CD4-positive, alpha-beta memory T cell (primary cell): ENCODE measurements at regions of chr15 and their contacts with region 1.

Region 1: DNA sequence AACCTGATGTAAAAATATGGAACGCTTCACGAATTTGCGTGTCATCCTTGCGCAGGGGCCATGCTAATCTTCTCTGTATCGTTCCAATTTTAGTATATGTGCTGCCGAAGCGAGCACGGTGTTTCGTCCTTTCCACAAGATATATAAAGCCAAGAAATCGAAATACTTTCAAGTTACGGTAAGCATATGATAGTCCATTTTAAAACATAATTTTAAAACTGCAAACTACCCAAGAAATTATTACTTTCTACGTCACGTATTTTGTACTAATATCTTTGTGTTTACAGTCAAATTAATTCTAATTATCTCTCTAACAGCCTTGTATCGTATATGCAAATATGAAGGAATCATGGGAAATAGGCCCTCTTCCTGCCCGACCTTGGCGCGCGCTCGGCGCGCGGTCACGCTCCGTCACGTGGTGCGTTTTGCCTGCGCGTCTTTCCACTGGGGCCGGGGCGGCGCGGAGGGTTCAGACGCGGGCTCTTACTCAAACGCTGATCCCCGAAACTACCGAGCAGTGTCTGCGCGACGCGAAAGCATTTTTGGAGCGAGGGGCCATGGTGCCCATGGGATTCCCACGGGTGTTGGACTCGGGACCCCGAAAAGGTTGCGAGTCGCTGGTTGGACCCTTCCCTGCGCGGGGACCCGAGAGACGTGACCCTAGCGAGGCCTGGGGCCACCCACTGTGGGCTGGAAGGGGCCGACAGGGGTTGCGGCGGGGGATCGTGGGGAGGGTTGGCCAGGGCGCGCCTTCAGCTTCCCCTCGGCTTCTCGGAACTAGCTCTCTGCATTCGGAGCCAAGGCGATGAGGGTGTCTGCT is at the start of gene RNU6-1:
- DNase-seq: peak; percentile 97 to 98 (median 98)
- H3K4me3 ChIP-seq: peak within 1 kb of the TSS; percentile 91 to 96
- H3K4me3 Mint-ChIP-seq: peak within 1 kb of the TSS; percentile 94 to 98 (median 96)
- H3K27ac ChIP-seq: peak within 1 kb of the TSS; percentile 90
- H3K27ac Mint-ChIP-seq: peak within 1 kb of the TSS; percentile 95 to 99 (median 97)
- H3K4me1 ChIP-seq: peaks cover 37% of the 10 kb centered on the region
- H3K4me1 Mint-ChIP-seq: peaks cover 11 to 54% (median 29%) of the 10 kb centered on the region in 4 donors
- H3K27me3 ChIP-seq: peaks cover 11% of the 10 kb centered on the region
- H3K27me3 Mint-ChIP-seq: peaks cover 6 to 11% of the 10 kb centered on the region in 2 donors
- total RNA-seq, gene RNU6-1: not detected

Region 2: GRCh38 chr15:66946578-66947164 is 893.5 kb before region 1 on chr15:
- CTCF ChIA-PET with region 1: interaction called, 4 read pairs
- POLR2A ChIA-PET with region 1: no interaction called
- intact Hi-C with region 1: loop called (anchors 1 kb)
- DNase-seq: peak; percentile 65 to 73 (median 71)
- H3K4me3 ChIP-seq: no peak overlapping the region
- H3K4me3 Mint-ChIP-seq: no peak overlapping the region
- H3K27ac ChIP-seq: no peak overlapping the region
- H3K27ac Mint-ChIP-seq: no peak overlapping the region
- H3K4me1 ChIP-seq: no peaks in the 10 kb centered on the region
- H3K4me1 Mint-ChIP-seq: peaks cover 0 to 4% (median 2%) of the 10 kb centered on the region in 4 donors
- H3K27me3 ChIP-seq: no peaks in the 10 kb centered on the region
- H3K27me3 Mint-ChIP-seq: no peaks in the 10 kb centered on the region

Region 3: GRCh38 chr15:67254238-67255175 is 585.6 kb before region 1 on chr15 and contains the starts of genes AAGAB and IQCH:
- CTCF ChIA-PET with region 1: no interaction called
- POLR2A ChIA-PET with region 1: no interaction called
- intact Hi-C with region 1: loop called (anchors 2 kb)
- DNase-seq: peak; percentile 93 to 97 (median 95)
- H3K4me3 ChIP-seq: peak within 1 kb of the TSS; percentile 96 to 98
- H3K4me3 Mint-ChIP-seq: peak within 1 kb of the TSS; percentile 96 to 99 (median 98)
- H3K27ac ChIP-seq: peak within 1 kb of the TSS; percentile 85
- H3K27ac Mint-ChIP-seq: peak within 1 kb of the TSS; percentile 89 to 99 (median 96)
- H3K4me1 ChIP-seq: peaks cover 34% of the 10 kb centered on the region
- H3K4me1 Mint-ChIP-seq: peaks cover 26 to 54% (median 40%) of the 10 kb centered on the region in 4 donors
- H3K27me3 ChIP-seq: no peaks in the 10 kb centered on the region
- H3K27me3 Mint-ChIP-seq: no peaks in the 10 kb centered on the region
- total RNA-seq, gene AAGAB: 30.2 to 30.3 TPM
- total RNA-seq, gene IQCH: 1.1 to 2.1 TPM

Region 4: DNA sequence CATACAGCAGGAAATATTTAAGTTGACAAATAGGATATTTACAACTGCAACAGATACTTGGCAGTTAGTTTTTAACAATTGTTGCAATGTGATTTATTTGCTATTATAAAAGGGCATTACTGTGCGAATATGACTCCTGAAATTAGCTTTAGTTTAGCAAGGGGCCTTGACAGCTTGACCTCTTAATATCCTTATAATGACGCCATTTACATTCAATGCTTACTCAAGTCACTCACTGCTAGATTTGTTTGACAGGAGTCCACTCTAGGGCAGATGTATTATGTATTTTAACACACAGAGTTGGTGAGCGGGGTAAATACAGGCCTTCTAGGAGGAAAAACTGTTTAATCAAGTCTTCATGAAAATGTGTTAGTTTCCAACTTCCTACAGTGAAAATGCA is 377.3 kb before region 1 on chr15:
- CTCF ChIA-PET with region 1: interaction called, 110 read pairs
- POLR2A ChIA-PET with region 1: interaction called, 10 read pairs
- intact Hi-C with region 1: no loop called
- DNase-seq: no peak
- H3K4me3 ChIP-seq: no peak overlapping the region
- H3K4me3 Mint-ChIP-seq: no peak overlapping the region
- H3K27ac ChIP-seq: no peak overlapping the region
- H3K27ac Mint-ChIP-seq: no peak overlapping the region
- H3K4me1 ChIP-seq: no peaks in the 10 kb centered on the region
- H3K4me1 Mint-ChIP-seq: no peaks in the 10 kb centered on the region
- H3K27me3 ChIP-seq: no peaks in the 10 kb centered on the region
- H3K27me3 Mint-ChIP-seq: no peaks in the 10 kb centered on the region

Region 5: GRCh38 chr15:67521029-67521811 is 318.9 kb before region 1 on chr15 and contains the start of gene C15orf61:
- CTCF ChIA-PET with region 1: interaction called, 3 read pairs
- POLR2A ChIA-PET with region 1: interaction called, 10 read pairs
- intact Hi-C with region 1: loop called (anchors 1 kb)
- DNase-seq: peak; percentile 86 to 89 (median 87)
- H3K4me3 ChIP-seq: peak within 1 kb of the TSS; percentile 64 to 93
- H3K4me3 Mint-ChIP-seq: peak within 1 kb of the TSS; percentile 90 to 96 (median 93)
- H3K27ac ChIP-seq: peak within 1 kb of the TSS; percentile 70
- H3K27ac Mint-ChIP-seq: peak within 1 kb of the TSS; percentile 93 to 97 (median 97)
- H3K4me1 ChIP-seq: peaks cover 33% of the 10 kb centered on the region
- H3K4me1 Mint-ChIP-seq: peaks cover 18 to 37% (median 26%) of the 10 kb centered on the region in 4 donors
- H3K27me3 ChIP-seq: no peaks in the 10 kb centered on the region
- H3K27me3 Mint-ChIP-seq: no peaks in the 10 kb centered on the region
- total RNA-seq, gene C15orf61: 9.5 to 13.4 TPM

Region 6: GRCh38 chr15:67784090-67784781 is 55.9 kb before region 1 on chr15:
- CTCF ChIA-PET with region 1: interaction called, 84 read pairs
- POLR2A ChIA-PET with region 1: interaction called, 82 read pairs
- intact Hi-C with region 1: loop called (anchors 1 kb)
- DNase-seq: peak in 4 of 5 donors; percentile 8 to 33 (median 26)
- H3K4me3 ChIP-seq: no peak overlapping the region
- H3K4me3 Mint-ChIP-seq: peak overlapping the region in 7 of 8 donors; percentile 26 to 74 (median 61)
- H3K27ac ChIP-seq: no peak overlapping the region
- H3K27ac Mint-ChIP-seq: peak overlapping the region; percentile 20 to 87 (median 82)
- H3K4me1 ChIP-seq: peaks cover 38% of the 10 kb centered on the region
- H3K4me1 Mint-ChIP-seq: peaks cover 21 to 31% (median 24%) of the 10 kb centered on the region in 4 donors
- H3K27me3 ChIP-seq: no peaks in the 10 kb centered on the region
- H3K27me3 Mint-ChIP-seq: no peaks in the 10 kb centered on the region

Region 7: GRCh38 chr15:67873777-67874176 is 33.6 kb after region 1 on chr15:
- CTCF ChIA-PET with region 1: no interaction called
- POLR2A ChIA-PET with region 1: no interaction called
- intact Hi-C with region 1: no loop called
- DNase-seq: no peak
- H3K4me3 ChIP-seq: no peak overlapping the region
- H3K4me3 Mint-ChIP-seq: no peak overlapping the region
- H3K27ac ChIP-seq: no peak overlapping the region
- H3K27ac Mint-ChIP-seq: no peak overlapping the region
- H3K4me1 ChIP-seq: no peaks in the 10 kb centered on the region
- H3K4me1 Mint-ChIP-seq: no peaks in the 10 kb centered on the region
- H3K27me3 ChIP-seq: no peaks in the 10 kb centered on the region
- H3K27me3 Mint-ChIP-seq: peaks cover 15 to 27% of the 10 kb centered on the region in 2 donors

Region 8: GRCh38 chr15:67967871-67968431 is 127.8 kb after region 1 on chr15:
- CTCF ChIA-PET with region 1: no interaction called
- POLR2A ChIA-PET with region 1: no interaction called
- intact Hi-C with region 1: no loop called
- DNase-seq: no peak
- H3K4me3 ChIP-seq: no peak overlapping the region
- H3K4me3 Mint-ChIP-seq: peak overlapping the region in 3 of 8 donors; percentile 39 to 66 (median 62)
- H3K27ac ChIP-seq: no peak overlapping the region
- H3K27ac Mint-ChIP-seq: no peak overlapping the region
- H3K4me1 ChIP-seq: peaks cover 4% of the 10 kb centered on the region
- H3K4me1 Mint-ChIP-seq: peaks cover 0 to 8% (median 3%) of the 10 kb centered on the region in 4 donors
- H3K27me3 ChIP-seq: peaks cover 9% of the 10 kb centered on the region
- H3K27me3 Mint-ChIP-seq: peaks cover 35 to 44% of the 10 kb centered on the region in 2 donors

Region 9: GRCh38 chr15:68053701-68054627 is 213.8 kb after region 1 on chr15 and contains the start of gene PIAS1:
- CTCF ChIA-PET with region 1: no interaction called
- POLR2A ChIA-PET with region 1: interaction called, 9 read pairs
- intact Hi-C with region 1: loop called (anchors 2 kb)
- DNase-seq: peak; percentile 91 to 94 (median 92)
- H3K4me3 ChIP-seq: peak within 1 kb of the TSS; percentile 80 to 97
- H3K4me3 Mint-ChIP-seq: peak within 1 kb of the TSS; percentile 91 to 96 (median 94)
- H3K27ac ChIP-seq: peak within 1 kb of the TSS; percentile 91
- H3K27ac Mint-ChIP-seq: peak within 1 kb of the TSS; percentile 83 to 96 (median 94)
- H3K4me1 ChIP-seq: peaks cover 38% of the 10 kb centered on the region
- H3K4me1 Mint-ChIP-seq: peaks cover 26 to 44% (median 34%) of the 10 kb centered on the region in 4 donors
- H3K27me3 ChIP-seq: no peaks in the 10 kb centered on the region
- H3K27me3 Mint-ChIP-seq: peaks cover 0 to 1% of the 10 kb centered on the region in 2 donors
- total RNA-seq, gene PIAS1: 86.0 to 86.2 TPM